Activated T-helper 2 cell treated with anti-CD3 and anti-CD28 coated beads, Interferon-gamma antibody, Interleukin-2, Interleukin-4, amounts not matched to agents 10 μg/mL and 5 μg/mL and 100 μg/mL, durations not matched to agents 14 hours and 24 hours and 36 hours (primary cell): ENCODE measurements at regions of chr17 and their contacts with region 1.

Region 1: GRCh38 chr17:36072431-36073121 is 8.5 kb downstream of the CCL18 start:
- DNase-seq: peak; percentile 44
- H3K4me3 Mint-ChIP-seq: no peak overlapping the region
- H3K27ac Mint-ChIP-seq: no peak overlapping the region
- H3K4me1 Mint-ChIP-seq: peaks cover 12% of the 10 kb centered on the region
- H3K27me3 Mint-ChIP-seq: peaks cover 38% of the 10 kb centered on the region

Region 2: GRCh38 chr17:35870906-35871819 is 201.4 kb before region 1 on chr17:
- intact Hi-C with region 1: no loop called
- DNase-seq: no peak
- H3K4me3 Mint-ChIP-seq: no peak overlapping the region
- H3K27ac Mint-ChIP-seq: no peak overlapping the region
- H3K4me1 Mint-ChIP-seq: peaks cover 22% of the 10 kb centered on the region
- H3K27me3 Mint-ChIP-seq: no peaks in the 10 kb centered on the region

Region 3: GRCh38 chr17:35969558-35970380 is 102.8 kb before region 1 on chr17:
- intact Hi-C with region 1: loop called (anchors 1 kb)
- DNase-seq: peak; percentile 53
- H3K4me3 Mint-ChIP-seq: no peak overlapping the region
- H3K27ac Mint-ChIP-seq: no peak overlapping the region
- H3K4me1 Mint-ChIP-seq: no peaks in the 10 kb centered on the region
- H3K27me3 Mint-ChIP-seq: peaks cover 11% of the 10 kb centered on the region

Region 4: DNA sequence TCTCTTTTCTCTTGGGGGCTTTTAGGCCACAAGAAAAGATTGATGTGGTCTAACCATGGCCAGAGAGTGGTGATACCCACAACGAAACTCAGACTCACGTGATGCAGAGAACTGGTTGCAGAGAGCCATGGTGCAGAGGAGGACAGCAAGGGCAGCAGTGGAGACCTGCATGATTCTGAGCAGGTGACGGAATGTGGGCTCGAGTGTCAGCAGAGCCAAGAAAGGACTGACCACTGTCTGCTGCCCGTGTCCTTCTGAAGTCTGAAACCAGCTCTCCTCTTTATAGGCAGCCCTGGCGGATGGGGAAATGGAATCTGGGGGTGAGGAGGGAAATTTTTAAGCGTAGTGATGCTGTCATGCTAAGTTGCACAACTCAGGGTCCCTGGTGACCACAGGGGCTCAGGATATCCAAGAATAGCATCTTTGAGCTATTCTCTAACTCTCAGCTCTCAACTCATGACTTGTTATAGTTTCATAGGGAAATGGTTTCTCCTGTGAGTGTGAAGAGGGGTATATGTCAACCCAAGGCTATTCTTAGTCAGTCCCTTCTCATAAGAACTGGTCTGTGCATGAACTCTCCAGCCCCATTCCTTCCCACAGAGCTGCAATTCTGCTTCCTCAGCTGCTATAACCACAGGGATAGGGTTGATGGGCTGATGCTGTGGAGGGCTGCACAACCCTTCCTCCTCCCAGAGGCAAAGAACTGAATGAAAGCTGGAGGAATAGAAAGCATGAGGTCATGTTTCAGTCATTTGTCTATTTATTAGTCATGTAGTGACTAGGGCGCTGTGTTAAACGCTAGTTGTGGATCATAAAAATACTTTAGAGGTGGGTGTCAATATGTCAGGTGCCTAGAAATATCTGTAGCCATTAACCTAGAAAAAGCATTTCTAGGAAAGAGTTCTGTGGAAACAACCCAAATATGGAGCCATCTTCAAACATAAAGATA is 17.6 kb after region 1 on chr17 and contains the start of gene CCL3:
- intact Hi-C with region 1: loop called (anchors 1 kb)
- DNase-seq: no peak
- H3K4me3 Mint-ChIP-seq: peak within 1 kb of the TSS; percentile 56
- H3K27ac Mint-ChIP-seq: peak within 1 kb of the TSS; percentile 85
- H3K4me1 Mint-ChIP-seq: peaks cover 43% of the 10 kb centered on the region
- H3K27me3 Mint-ChIP-seq: peaks cover 25% of the 10 kb centered on the region
- total RNA-seq, gene CCL3: 218 and 222 TPM in 2 replicates

Region 5: GRCh38 chr17:36117505-36118382 is 45.2 kb after region 1 on chr17:
- intact Hi-C with region 1: loop called (anchors 1 kb)
- DNase-seq: no peak
- H3K4me3 Mint-ChIP-seq: no peak overlapping the region
- H3K27ac Mint-ChIP-seq: peak overlapping the region; percentile 44
- H3K4me1 Mint-ChIP-seq: peaks cover 11% of the 10 kb centered on the region
- H3K27me3 Mint-ChIP-seq: no peaks in the 10 kb centered on the region

Region 6: DNA sequence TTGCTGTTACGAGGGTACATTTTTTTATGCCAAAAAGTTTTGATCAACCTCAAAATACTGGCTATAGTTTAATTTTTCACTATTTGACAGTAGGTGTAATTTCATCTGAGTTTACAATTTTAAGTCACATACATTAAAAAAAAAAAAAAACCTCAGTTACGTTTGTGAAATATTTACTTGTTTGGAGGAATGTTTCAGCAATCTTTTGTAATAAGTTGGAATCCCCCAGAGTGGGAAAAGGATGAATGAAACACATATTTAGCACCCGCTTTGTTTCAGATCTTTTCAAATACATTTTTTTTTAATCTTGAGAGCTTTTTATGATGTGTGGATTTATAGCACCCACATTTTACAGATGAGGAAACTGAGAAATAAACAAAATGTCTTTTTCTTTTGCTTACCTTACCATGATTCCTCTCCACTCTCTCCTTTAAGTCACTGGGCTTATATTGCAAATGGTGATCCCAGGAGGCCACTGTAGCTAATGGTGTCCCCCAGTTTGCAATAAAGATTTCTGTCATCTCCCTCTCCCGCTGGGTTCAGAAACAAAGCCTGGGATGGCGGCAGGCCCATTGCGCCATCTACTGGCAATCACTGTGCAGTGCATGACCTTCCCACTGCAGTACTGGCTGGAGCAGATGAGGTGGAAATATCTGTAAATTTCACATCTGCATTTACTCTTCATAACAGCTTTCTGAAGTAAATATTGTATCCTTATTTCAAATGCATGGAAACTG is 76.2 kb after region 1 on chr17:
- intact Hi-C with region 1: loop called (anchors 5 kb)
- DNase-seq: peak; percentile 42
- H3K4me3 Mint-ChIP-seq: no peak overlapping the region
- H3K27ac Mint-ChIP-seq: no peak overlapping the region
- H3K4me1 Mint-ChIP-seq: peaks cover 1% of the 10 kb centered on the region
- H3K27me3 Mint-ChIP-seq: peaks cover 24% of the 10 kb centered on the region